ENCODE measurements at regions of chr17 and their contacts with region 1.

Region 1: DNA sequence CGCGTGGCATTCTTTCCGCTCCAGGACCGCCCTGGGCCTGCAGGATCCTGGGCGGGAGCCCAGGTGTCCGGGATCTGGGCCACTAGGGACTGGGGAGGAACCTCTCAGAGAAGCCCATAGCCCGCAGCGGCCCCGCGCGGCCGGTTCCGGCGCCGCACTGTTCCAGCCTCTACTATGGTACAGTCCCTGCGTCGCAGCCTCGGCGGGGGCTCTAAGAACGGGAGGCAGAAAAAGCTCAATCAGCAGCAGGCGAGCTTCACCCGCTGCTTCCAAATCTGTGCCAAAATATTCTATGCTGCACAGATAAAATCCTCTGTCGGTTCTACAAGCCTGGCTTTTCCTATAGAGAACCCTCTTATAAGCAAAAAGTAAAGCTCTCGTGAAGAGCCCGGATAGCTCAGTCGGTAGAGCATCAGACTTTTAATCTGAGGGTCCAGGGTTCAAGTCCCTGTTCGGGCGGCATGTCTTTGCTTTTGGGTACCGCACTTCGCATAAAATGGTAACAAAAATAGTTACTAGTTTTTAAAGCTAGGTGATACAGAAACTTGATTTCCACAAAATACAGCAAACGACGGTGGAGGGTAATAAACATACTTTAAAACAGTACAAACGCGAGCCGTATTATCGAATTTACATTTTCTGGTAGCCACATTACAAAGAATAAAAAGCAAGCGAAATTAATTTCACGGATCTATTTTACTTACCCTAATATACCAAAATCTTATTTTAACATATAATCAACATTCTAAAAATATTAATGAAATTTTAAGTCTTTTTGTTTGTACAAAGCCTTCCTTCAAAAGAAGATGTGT is 661 bp upstream of the ALOXE3 start:
- DNase-seq: peak; percentile 93
- H3K4me3 ChIP-seq: peak overlapping the region; percentile 68
- H3K27ac ChIP-seq: peak overlapping the region; percentile 29
- H3K4me1 ChIP-seq: no peaks in the 10 kb centered on the region
- H3K27me3 ChIP-seq: no peaks in the 10 kb centered on the region
- CTCF ChIP-seq: peak; percentile 99

Region 2: GRCh38 chr17:7644775-7645174 is 474.2 kb before region 1 on chr17:
- CTCF ChIA-PET with region 1: no interaction called
- POLR2A ChIA-PET with region 1: no interaction called
- intact Hi-C with region 1: no loop called
- DNase-seq: no peak
- H3K4me3 ChIP-seq: no peak overlapping the region
- H3K27ac ChIP-seq: no peak overlapping the region
- H3K4me1 ChIP-seq: no peaks in the 10 kb centered on the region
- H3K27me3 ChIP-seq: no peaks in the 10 kb centered on the region
- CTCF ChIP-seq: no peak

Region 3: GRCh38 chr17:7972131-7972785 is 146.7 kb before region 1 on chr17:
- CTCF ChIA-PET with region 1: no interaction called
- POLR2A ChIA-PET with region 1: no interaction called
- intact Hi-C with region 1: no loop called
- DNase-seq: no peak
- H3K4me3 ChIP-seq: no peak overlapping the region
- H3K27ac ChIP-seq: no peak overlapping the region
- H3K4me1 ChIP-seq: no peaks in the 10 kb centered on the region
- H3K27me3 ChIP-seq: no peaks in the 10 kb centered on the region
- CTCF ChIP-seq: peak; percentile 30; the same call in 1 of the 2 replicates

Region 4: DNA sequence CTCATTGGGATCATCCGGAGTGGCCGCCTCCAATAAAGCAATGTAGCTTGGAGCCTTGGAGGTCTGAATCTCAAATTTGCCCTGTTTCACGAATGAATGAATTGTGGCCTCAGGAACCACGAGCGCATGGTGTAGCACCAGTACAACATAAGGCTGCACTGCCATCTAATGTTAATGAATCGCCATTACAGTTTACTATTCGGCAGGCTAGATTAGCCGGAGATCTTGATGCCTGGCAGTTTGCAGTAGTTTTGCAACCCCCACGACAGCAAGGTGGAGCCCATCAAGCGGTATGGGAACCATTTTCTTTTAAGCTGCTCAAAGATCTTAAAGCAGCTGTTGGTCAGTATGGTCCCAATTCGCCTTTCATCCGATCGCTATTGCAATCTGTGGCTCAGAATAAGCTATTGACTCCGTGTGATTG is 61.3 kb before region 1 on chr17:
- CTCF ChIA-PET with region 1: interaction called, 9 read pairs
- POLR2A ChIA-PET with region 1: no interaction called
- intact Hi-C with region 1: loop called (anchors 5 kb)
- DNase-seq: peak; percentile 92
- H3K4me3 ChIP-seq: no peak overlapping the region
- H3K27ac ChIP-seq: no peak overlapping the region
- H3K4me1 ChIP-seq: peaks cover 17% of the 10 kb centered on the region
- H3K27me3 ChIP-seq: peaks cover 14% of the 10 kb centered on the region
- CTCF ChIP-seq: peak; percentile 80

Region 5: DNA sequence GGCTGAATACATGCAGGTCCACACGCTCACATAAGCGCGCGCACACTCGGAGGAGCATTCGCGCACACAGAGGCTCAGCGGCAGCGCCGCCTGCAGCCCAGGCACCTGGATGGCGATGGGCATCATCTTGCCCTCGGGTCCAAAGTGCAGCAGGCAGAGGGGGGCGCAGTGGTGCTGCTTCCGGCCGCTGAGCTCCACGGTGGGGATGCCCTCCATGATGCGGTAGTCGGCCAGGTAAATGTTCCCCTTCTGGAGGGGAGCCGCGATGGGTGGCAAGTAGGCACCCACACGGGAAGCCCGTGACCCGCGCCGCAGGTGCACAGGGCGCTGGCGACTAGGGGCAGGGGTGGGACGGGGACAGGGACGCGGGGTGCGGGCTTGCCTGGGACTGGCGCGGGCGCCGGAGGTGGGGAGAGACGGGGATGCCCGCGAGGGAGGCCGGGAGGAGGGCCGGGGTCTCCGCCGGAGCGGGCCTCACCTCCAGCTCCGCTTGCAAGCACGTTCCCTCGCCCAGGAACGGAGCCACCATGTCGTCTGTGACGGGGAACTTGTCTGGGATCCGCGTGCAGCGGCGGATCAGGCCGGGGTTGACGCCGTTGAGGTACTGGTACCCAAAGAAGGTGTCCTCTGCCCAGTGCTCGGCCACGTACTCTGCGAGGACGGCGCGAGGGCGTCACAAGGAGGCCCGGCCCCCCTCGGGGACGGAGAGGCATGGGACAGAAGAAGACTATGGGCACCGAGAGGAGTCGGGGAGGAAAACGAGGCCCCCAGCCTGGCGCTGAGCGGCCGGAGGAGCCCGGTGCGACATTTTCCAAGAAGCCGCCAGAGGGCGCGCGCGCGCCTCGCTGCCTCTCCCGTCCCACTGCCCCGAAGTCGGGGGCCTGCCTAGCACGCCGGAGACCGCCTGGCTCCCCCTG is 39.4 kb before region 1 on chr17:
- CTCF ChIA-PET with region 1: interaction called, 17 read pairs
- POLR2A ChIA-PET with region 1: no interaction called
- intact Hi-C with region 1: loop called (anchors 5 kb)
- DNase-seq: peak; percentile 80
- H3K4me3 ChIP-seq: peak overlapping the region; percentile 53
- H3K27ac ChIP-seq: no peak overlapping the region
- H3K4me1 ChIP-seq: no peaks in the 10 kb centered on the region
- H3K27me3 ChIP-seq: peaks cover 12% of the 10 kb centered on the region
- CTCF ChIP-seq: peak; percentile 94

Region 6: DNA sequence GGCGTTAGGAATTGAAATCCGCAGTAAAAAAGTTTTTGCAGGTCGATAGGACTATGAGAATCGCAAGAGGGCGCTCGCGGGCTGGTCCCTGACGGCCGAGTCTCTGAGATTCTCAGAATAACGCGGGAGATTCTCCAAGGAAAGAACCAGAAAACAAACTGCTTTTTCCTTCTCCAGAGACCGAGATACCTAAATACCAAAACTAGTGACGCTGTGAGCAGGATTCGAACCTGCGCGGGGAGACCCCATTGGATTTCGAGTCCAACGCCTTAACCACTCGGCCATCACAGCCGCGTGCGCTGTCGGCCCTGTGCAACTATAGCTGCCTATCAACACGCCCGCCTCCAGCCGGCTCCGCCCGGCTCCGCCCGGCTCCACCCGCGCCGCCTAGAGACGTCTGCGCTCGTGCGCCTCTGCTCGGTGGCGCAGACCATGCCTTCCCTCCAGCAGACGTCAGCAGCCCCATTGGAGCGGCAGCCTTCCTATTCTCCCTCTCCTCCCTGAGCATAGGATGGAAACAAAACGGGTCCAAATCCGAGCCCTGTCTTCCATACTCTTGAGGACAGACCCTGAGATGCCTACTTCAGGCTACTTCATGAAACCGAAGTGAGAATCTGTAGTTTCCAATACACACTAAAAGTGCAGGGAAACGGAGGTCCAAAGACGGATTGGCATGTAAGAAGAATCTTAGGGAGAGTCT is 19.8 kb after region 1 on chr17:
- CTCF ChIA-PET with region 1: interaction called, 4 read pairs
- POLR2A ChIA-PET with region 1: interaction called, 5 read pairs
- intact Hi-C with region 1: loop called (anchors 1 kb)
- DNase-seq: peak; percentile 99
- H3K4me3 ChIP-seq: peak overlapping the region; percentile 55
- H3K27ac ChIP-seq: peak overlapping the region; percentile 87
- H3K4me1 ChIP-seq: no peaks in the 10 kb centered on the region
- H3K27me3 ChIP-seq: no peaks in the 10 kb centered on the region
- CTCF ChIP-seq: peak; percentile 91

Region 7: DNA sequence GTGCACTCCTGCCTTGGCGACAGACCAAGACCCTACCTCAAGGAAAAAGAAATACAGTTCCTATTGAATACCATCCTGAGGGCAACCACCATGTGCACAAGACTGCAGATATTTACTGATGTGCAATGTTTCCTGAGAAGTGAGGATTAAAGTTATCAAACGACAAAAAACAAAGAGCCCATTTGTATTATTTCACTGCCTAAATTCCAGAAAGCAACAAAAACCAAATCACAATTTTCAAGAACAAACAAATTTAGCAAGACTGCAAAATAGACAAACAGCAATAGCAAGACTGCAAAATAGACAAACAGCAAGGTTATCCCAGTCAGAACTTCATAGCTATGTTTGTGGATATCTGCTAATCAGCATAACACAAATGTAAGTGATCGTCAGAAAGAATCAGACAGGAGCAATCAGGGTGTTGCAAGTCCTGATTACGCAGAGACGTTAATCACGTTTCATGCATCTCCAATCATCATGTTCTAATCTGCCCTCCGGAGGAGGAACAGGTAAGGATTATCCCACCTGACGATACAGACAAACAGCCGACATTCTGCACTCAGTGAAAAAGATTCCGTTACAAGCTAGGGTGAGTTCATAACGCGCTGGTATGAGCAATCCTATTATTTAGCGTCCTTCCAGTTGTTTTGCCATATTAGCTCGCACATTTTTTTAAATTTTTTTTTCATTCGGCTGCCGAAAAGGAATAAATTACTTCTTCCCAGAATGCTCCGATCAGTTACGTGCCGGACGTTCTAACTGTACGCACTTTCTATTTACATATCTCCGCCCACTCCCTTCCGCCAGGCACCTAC is 54.3 kb after region 1 on chr17:
- CTCF ChIA-PET with region 1: interaction called, 3 read pairs
- POLR2A ChIA-PET with region 1: interaction called, 12 read pairs
- intact Hi-C with region 1: no loop called
- DNase-seq: peak; percentile 96
- H3K4me3 ChIP-seq: peak overlapping the region; percentile 44
- H3K27ac ChIP-seq: peak overlapping the region; percentile 98
- H3K4me1 ChIP-seq: peaks cover 18% of the 10 kb centered on the region
- H3K27me3 ChIP-seq: no peaks in the 10 kb centered on the region
- CTCF ChIP-seq: no peak

Region 8: DNA sequence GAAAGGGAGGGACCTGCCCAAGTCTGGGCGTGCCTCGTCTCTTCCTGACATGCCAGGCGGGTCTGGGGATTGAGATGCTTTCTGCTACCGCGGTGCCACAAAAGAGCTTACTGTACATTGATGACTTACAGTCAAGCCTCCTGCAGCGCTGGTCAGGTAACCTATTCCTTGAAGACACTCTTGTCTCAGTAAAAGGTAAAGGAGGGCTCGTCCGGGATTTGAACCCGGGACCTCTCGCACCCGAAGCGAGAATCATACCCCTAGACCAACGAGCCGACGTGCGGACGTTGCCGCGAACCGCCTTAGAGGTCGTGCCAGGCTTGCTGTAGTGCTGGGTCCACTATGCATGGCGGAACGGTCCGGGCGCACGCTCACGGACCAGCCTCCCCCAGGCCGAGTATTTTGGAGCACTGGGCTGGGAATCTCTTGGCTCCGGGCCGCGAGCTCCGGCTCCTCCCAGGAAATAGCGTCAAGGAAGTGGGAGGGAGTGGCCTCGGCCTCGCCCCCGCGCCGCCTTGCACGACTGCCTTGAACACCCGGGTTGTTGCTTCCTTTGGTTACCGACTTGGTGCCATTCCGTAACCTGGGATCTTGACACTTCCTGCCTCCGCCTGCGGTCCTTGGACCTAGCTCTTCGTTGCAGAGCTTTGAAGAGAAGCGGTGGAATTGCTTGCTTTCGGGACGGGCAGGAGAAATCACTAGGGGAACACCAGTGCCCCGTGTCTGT is 103.8 kb after region 1 on chr17:
- CTCF ChIA-PET with region 1: interaction called, 3 read pairs
- POLR2A ChIA-PET with region 1: no interaction called
- intact Hi-C with region 1: loop called (anchors 1 kb)
- DNase-seq: peak; percentile 96
- H3K4me3 ChIP-seq: peak overlapping the region; percentile 85
- H3K27ac ChIP-seq: peak overlapping the region; percentile 95
- H3K4me1 ChIP-seq: peaks cover 13% of the 10 kb centered on the region
- H3K27me3 ChIP-seq: no peaks in the 10 kb centered on the region
- CTCF ChIP-seq: no peak